ENCODE measurements at regions of chr6 and their contacts with region 1.

Region 1: GRCh38 chr6:27132532-27133280 is 114.8 kb upstream of the PRSS16 start:
- DNase-seq: peak; percentile 94
- H3K4me3 Mint-ChIP-seq: no peak overlapping the region
- H3K27ac Mint-ChIP-seq: no peak overlapping the region
- H3K4me1 Mint-ChIP-seq: peaks cover 19% of the 10 kb centered on the region
- H3K27me3 Mint-ChIP-seq: no peaks in the 10 kb centered on the region

Region 2: DNA sequence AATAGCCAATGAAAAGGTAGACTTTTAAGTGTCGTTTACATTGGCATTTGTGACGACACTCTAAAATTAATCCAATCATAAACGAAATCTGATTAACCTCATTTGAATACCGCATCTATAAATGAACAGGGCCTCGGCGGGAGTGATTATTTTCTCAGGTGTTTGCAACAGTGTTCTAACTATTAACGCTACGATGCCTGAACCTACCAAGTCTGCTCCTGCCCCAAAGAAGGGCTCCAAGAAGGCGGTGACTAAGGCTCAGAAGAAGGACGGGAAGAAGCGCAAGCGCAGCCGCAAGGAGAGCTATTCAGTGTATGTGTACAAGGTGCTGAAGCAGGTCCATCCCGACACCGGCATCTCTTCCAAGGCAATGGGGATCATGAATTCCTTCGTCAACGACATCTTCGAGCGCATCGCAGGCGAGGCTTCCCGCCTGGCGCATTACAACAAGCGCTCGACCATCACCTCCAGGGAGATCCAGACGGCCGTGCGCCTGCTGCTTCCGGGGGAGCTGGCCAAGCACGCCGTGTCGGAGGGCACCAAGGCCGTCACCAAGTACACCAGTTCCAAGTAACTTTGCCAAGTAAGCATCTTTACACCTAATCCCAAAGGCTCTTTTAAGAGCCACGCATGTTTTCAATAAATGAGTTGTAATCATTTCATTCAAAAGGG is 974.6 kb before region 1 on chr6:
- CTCF ChIA-PET with region 1: no interaction called
- intact Hi-C with region 1: loop called (anchors 1 kb)
- DNase-seq: peak; percentile 92
- H3K4me3 Mint-ChIP-seq: peak overlapping the region; percentile 79
- H3K27ac Mint-ChIP-seq: peak overlapping the region; percentile 97
- H3K4me1 Mint-ChIP-seq: peaks cover 50% of the 10 kb centered on the region
- H3K27me3 Mint-ChIP-seq: peaks cover 13% of the 10 kb centered on the region

Region 3: DNA sequence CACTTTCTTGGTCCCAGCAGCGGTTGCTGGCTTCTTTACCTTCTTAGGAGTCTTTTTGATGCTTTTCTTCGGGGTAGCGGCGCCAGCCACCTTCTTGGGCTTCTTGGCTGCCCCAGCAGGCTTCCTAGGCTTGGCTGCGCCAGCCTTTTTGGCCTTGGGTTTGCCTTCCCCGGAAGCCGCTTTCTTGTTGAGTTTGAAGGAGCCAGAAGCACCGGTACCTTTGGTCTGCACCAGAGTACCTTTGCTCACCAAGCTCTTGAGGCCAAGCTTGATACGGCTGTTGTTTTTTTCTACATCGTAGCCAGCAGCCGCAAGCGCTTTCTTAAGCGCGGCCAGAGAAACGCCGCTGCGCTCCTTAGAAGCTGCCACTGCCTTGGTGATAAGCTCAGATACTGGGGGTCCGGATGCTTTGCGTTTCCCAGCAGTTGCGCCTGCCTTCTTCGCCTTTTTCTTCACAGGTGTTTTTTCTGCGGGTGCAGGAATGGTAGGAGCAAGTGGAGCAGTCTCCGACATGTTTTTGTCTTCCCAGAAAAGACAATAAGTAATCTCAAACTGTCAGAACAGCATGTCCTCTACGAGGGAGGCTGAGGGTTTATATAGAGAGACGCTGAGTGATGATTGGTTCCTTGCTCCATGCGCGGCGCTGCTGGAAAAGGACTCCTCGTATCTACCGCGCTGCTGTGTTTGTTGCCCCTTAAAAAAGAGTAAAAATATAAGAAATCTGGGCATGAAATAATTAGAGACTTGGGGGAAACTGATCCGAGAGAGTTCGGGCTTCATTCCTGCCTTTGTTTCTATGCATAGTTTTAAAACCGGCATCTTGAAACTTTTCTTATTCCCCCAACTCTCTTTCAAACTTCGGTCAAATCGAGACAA is 898.0 kb before region 1 on chr6:
- CTCF ChIA-PET with region 1: no interaction called
- intact Hi-C with region 1: loop called (anchors 1 kb)
- DNase-seq: peak; percentile 90
- H3K4me3 Mint-ChIP-seq: peak overlapping the region; percentile 83
- H3K27ac Mint-ChIP-seq: peak overlapping the region; percentile 100
- H3K4me1 Mint-ChIP-seq: peaks cover 28% of the 10 kb centered on the region
- H3K27me3 Mint-ChIP-seq: peaks cover 3% of the 10 kb centered on the region

Region 4: DNA sequence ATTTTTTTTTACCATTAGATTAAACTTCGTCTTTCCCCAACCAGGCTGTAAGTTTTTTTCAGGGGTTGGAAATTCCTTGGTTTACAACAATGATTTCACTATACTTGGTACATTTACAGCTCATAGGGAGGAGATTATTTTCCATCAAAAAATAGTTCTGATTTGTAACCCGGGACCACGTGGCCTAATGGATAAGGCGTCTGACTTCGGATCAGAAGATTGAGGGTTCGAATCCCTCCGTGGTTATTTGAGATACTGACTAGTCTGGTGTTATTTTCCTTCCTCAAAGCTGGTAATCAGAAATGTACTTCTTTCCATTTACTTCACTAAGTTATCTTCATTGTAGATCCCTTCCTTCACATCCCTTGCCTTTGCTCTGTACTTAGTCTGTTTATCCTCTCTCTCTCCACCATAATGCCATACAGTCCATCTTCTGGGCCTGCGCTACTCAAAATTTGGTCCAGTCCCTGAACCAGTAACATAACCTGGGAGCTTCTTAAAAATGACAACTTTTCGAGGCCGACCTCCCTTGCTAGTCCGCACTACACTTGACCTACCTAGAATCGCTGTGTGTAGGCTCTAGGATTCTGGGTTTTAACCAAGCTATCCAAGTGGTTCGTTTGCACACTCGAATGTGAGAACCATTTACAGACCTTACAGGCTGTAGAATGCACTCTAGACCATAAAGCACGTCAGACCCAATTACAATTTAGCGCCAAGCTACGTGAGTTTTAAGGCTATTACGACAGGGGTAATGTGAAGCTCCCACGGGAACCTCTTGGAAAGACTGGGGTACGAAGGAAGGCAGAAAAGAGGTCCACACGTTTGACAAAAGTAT is 809.8 kb before region 1 on chr6:
- CTCF ChIA-PET with region 1: no interaction called
- intact Hi-C with region 1: loop called (anchors 5 kb)
- DNase-seq: peak; percentile 74
- H3K4me3 Mint-ChIP-seq: peak overlapping the region; percentile 83
- H3K27ac Mint-ChIP-seq: peak overlapping the region; percentile 89
- H3K4me1 Mint-ChIP-seq: peaks cover 30% of the 10 kb centered on the region
- H3K27me3 Mint-ChIP-seq: peaks cover 30% of the 10 kb centered on the region

Region 5: DNA sequence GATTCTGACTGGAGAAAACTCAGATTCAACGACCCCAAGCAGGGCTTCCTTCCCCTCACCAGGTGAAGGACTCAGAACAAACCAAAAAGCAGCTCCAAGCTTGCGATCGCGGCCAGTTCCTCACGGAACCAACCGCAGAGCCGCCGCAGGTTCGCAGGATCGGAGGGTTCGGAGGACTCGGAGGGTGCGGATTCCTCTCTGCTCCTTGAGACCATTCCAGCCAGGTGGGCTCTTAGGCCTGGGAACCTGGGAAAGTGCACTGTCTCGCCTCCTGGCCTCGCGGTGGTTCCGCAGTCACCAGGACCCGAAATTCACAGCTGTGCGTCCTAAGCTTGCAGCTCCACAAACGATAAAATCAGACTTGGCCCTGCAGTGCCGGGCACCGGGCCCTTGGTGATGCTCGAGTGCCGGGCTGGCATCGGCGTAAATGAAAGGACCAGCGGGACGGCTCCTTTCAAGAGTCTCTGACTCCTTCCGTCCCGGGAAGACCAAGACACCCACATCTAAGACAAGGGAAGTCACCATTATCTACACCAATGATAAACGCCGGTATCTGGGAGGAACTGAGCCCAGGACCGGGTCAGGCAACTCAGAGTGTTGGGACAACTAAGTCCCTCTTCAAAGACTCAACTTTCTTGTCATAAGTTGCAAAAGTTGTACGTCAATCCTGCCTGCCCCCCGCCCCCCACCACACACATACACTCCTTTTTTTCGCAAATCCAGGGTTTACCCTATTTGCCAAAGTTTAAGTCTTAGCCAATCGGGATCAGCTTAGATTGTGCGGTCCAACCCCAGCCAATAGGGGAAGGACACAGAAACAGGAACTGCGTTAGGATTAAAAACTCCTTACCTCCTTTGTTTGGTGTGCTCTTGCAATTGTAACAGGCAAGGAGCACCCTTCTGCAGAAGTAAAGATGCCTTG is 45.0 kb after region 1 on chr6:
- CTCF ChIA-PET with region 1: no interaction called
- intact Hi-C with region 1: loop called (anchors 1 kb)
- DNase-seq: peak; percentile 83
- H3K4me3 Mint-ChIP-seq: peak overlapping the region; percentile 92
- H3K27ac Mint-ChIP-seq: peak overlapping the region; percentile 87
- H3K4me1 Mint-ChIP-seq: peaks cover 4% of the 10 kb centered on the region
- H3K27me3 Mint-ChIP-seq: peaks cover 6% of the 10 kb centered on the region

Region 6: GRCh38 chr6:27809939-27810767 is 677.4 kb after region 1 on chr6:
- CTCF ChIA-PET with region 1: no interaction called
- intact Hi-C with region 1: loop called (anchors 1 kb)
- DNase-seq: peak; percentile 81
- H3K4me3 Mint-ChIP-seq: peak overlapping the region; percentile 93
- H3K27ac Mint-ChIP-seq: peak overlapping the region; percentile 95
- H3K4me1 Mint-ChIP-seq: peaks cover 41% of the 10 kb centered on the region
- H3K27me3 Mint-ChIP-seq: peaks cover 3% of the 10 kb centered on the region

Region 7: GRCh38 chr6:28880894-28881780 is 1748.4 kb after region 1 on chr6:
- CTCF ChIA-PET with region 1: interaction called, 3 read pairs
- intact Hi-C with region 1: loop called (anchors 5 kb)
- DNase-seq: peak; percentile 86
- H3K4me3 Mint-ChIP-seq: peak overlapping the region; percentile 76
- H3K27ac Mint-ChIP-seq: peak overlapping the region; percentile 83
- H3K4me1 Mint-ChIP-seq: peaks cover 36% of the 10 kb centered on the region
- H3K27me3 Mint-ChIP-seq: peaks cover 5% of the 10 kb centered on the region